Gastrocnemius medialis (tissue), 4 donors: ENCODE measurements at regions of chrX and their contacts with region 1.

Region 1: DNA sequence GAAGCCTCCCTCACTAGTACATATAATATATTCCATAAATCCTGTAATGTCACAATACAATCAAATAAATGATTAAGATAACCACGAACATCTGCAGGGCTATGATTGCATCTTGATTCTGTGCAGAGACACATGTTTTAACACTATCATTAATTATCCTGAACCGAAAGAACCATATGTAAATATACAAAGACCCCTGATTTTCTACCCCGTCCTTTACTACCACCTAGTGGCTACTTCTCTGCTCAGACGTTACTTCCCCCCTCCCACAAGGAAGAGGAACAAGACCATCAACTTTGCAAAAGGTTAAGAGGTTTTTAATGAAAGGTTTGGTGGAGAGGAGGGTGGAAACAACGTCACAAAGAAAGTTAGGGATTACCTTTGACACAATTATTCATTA is 134.0 kb downstream of the COL4A6 start:
- DNase-seq: no peak
- ATAC-seq: no peak
- H3K4me3 ChIP-seq: no peak overlapping the region
- H3K27ac ChIP-seq: no peak overlapping the region
- H3K4me1 ChIP-seq: peaks cover 6% of the 10 kb centered on the region in 2 donors
- H3K27me3 ChIP-seq: no peaks in the 10 kb centered on the region
- CTCF ChIP-seq: peak in 4 of 5 experiments; percentile 15 to 49 (median 24)
- POLR2A ChIP-seq: no peak

Region 2: DNA sequence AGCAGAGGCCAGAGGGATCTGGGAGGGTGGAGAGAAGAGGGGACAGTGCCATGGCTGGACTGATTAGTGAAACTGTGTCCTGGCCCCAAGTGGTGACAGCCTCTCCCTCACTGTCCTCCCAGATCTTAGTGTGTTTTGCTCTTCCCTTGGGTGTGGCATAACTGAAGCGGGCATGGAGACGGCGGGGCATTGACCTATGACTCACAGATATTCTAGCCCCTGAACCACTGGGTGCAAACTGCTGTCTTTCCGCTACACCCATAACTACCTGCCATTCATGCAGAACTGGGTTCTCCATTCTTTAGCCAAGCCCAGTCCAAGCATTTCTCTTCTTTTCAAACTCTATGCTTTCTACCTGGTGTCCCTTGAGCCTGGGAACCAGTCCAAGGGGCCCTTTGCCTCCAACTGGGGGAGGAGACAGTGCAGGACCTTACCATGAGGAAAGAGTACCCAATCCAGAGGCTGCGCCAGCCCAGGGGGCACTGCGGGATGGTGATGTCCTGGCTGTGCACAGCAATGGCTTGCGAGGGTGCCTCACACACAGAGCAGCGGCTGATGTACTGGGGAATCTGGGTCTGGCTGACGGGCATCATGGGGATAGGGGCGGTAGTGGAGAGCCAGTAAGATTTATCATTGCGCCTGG is 145.1 kb before region 1 on chrX:
- in situ Hi-C with region 1: no loop called
- intact Hi-C with region 1: no loop called
- DNase-seq: no peak
- ATAC-seq: no peak
- H3K4me3 ChIP-seq: no peak overlapping the region
- H3K27ac ChIP-seq: no peak overlapping the region
- H3K4me1 ChIP-seq: no peaks in the 10 kb centered on the region
- H3K27me3 ChIP-seq: no peaks in the 10 kb centered on the region
- CTCF ChIP-seq: no peak
- POLR2A ChIP-seq: no peak

Region 3: DNA sequence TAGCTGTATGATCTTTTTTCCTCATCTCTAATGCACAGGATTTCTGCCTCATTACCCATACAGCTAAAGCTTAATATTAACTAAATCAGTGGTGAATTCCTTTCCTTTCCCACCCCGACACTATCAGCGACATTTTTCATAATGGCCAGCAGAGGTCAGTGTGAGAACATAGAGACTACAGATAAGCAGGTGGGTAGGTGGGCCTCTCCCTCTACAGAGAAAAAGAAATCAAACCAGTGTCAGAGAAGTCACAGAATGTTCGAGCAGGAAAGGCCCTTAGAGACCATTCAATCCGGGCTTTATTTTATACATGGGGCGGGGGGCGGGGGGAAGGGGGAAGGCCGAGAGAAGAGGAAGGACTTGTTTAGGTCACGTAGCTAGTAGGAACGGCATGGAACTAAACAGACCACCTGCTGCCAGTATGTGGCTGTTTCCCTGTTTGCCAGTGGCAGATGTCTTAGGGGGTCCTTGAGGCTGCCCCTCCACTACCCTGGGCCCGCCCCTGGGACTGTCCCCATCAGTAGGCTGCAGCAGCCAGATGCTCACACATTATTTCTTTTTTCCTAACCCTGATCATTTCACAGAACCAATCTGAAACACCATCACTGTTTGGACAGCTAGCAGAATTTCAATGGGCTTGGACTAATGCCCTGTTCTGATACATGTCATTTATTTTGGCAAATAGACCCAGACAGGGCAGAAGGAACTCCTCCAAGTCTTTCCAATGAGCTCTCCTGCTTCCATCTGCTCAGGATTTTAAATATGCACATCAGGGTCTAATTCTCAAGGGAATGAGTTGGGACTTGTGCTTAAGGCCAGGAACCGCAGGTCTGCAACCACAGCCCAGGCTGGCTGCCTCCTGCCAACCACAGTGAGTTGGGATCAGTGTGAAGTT is 79.2 kb before region 1 on chrX:
- in situ Hi-C with region 1: no loop called
- intact Hi-C with region 1: loop called (anchors 2 kb)
- DNase-seq: no peak
- ATAC-seq: no peak
- H3K4me3 ChIP-seq: no peak overlapping the region
- H3K27ac ChIP-seq: no peak overlapping the region
- H3K4me1 ChIP-seq: no peaks in the 10 kb centered on the region
- H3K27me3 ChIP-seq: no peaks in the 10 kb centered on the region
- CTCF ChIP-seq: peak; percentile 19 to 61 (median 32)
- POLR2A ChIP-seq: no peak

Region 4: GRCh38 chrX:108384783-108385182 is 80.6 kb after region 1 on chrX:
- in situ Hi-C with region 1: no loop called
- intact Hi-C with region 1: loop called (anchors 10 kb)
- DNase-seq: no peak
- ATAC-seq: no peak
- H3K4me3 ChIP-seq: no peak overlapping the region
- H3K27ac ChIP-seq: no peak overlapping the region
- H3K4me1 ChIP-seq: peaks cover 5 to 12% of the 10 kb centered on the region in 2 donors
- H3K27me3 ChIP-seq: peaks cover 0 to 3% (median 0%) of the 10 kb centered on the region in 3 donors
- CTCF ChIP-seq: no peak
- POLR2A ChIP-seq: no peak

Region 5: GRCh38 chrX:108439961-108440696 is 135.9 kb after region 1 on chrX:
- in situ Hi-C with region 1: no loop called
- intact Hi-C with region 1: loop called (anchors 5 kb)
- DNase-seq: peak; percentile 1 to 12
- ATAC-seq: peak; percentile 41 to 64
- H3K4me3 ChIP-seq: peak overlapping the region; percentile 57 to 66 (median 63)
- H3K27ac ChIP-seq: peak overlapping the region; percentile 71 to 84 (median 82)
- H3K4me1 ChIP-seq: no peaks in the 10 kb centered on the region
- H3K27me3 ChIP-seq: no peaks in the 10 kb centered on the region
- CTCF ChIP-seq: no peak
- POLR2A ChIP-seq: no peak